ENCODE measurements at regions of chr3 and their contacts with region 1.

Region 1: GRCh38 chr3:48018841-48019240 is 2.6 kb upstream of the MAP4 start:
- DNase-seq: peak; percentile 81
- ATAC-seq: peak; percentile 35
- H3K4me3 ChIP-seq: no peak overlapping the region
- H3K27ac ChIP-seq: peak overlapping the region; percentile 44; the same call in 1 of the 2 replicates
- H3K4me1 ChIP-seq: peaks cover 33% of the 10 kb centered on the region
- H3K27me3 ChIP-seq: no peaks in the 10 kb centered on the region
- CTCF ChIP-seq: no peak
- POLR2A ChIP-seq: no peak
- RAD21 ChIP-seq: no peak

Region 2: GRCh38 chr3:48077815-48078214 is 59.0 kb after region 1 on chr3:
- CTCF ChIA-PET with region 1: no interaction called
- POLR2A ChIA-PET with region 1: interaction called, 11 read pairs
- dilution Hi-C with region 1: no loop called
- in situ Hi-C with region 1: no loop called
- intact Hi-C with region 1: no loop called
- DNase-seq: peak; percentile 31
- ATAC-seq: peak; percentile 37
- H3K4me3 ChIP-seq: no peak overlapping the region
- H3K27ac ChIP-seq: no peak overlapping the region
- H3K4me1 ChIP-seq: peaks cover 2% of the 10 kb centered on the region
- H3K27me3 ChIP-seq: no peaks in the 10 kb centered on the region
- CTCF ChIP-seq: no peak
- POLR2A ChIP-seq: no peak
- RAD21 ChIP-seq: no peak

Region 3: GRCh38 chr3:48222616-48223513 is 204.0 kb after region 1 on chr3 and contains the start of gene CAMP:
- CTCF ChIA-PET with region 1: no interaction called
- POLR2A ChIA-PET with region 1: no interaction called
- dilution Hi-C with region 1: no loop called
- in situ Hi-C with region 1: no loop called
- intact Hi-C with region 1: no loop called
- DNase-seq: peak; percentile 30
- ATAC-seq: no peak; the same call in 1 of the 2 replicates
- H3K4me3 ChIP-seq: no peak within 1 kb of the TSS
- H3K27ac ChIP-seq: no peak within 1 kb of the TSS
- H3K4me1 ChIP-seq: no peaks in the 10 kb centered on the region
- H3K27me3 ChIP-seq: peaks cover 47% of the 10 kb centered on the region
- CTCF ChIP-seq: no peak
- POLR2A ChIP-seq: no peak
- RAD21 ChIP-seq: no peak
- total RNA-seq, gene CAMP: not detected in 2 replicates

Measured in IMR-90 (cell line).